Activated CD4-positive, alpha-beta T cell treated with anti-CD3 and anti-CD28 coated beads for 36 hours (primary cell): ENCODE measurements at regions of chr1 and their contacts with region 1.

Region 1: DNA sequence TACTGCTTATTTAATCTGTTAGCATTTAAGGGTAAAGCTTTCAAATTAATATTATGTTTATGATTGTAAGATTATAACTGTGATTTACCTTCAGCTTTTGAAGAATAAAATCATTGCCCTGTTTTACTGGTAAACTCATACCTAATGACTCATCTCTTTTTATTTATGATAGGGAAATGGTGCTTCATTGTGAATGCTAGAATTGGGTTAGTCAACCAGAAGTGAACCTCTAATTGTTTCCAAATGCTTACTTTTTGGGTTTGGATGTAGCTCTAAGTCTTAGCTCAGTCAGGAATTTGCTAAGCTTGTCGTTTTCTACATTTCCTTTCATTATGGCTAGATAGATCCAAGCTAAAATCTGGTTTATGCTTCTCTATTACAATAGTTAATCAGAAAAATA is 59.4 kb downstream of the SLC30A7 start:
- DNase-seq: no peak
- ATAC-seq: peak; percentile 57
- H3K4me3 Mint-ChIP-seq: no peak overlapping the region
- H3K27ac Mint-ChIP-seq: peak overlapping the region; percentile 69
- H3K4me1 Mint-ChIP-seq: peaks cover 59% of the 10 kb centered on the region
- H3K27me3 Mint-ChIP-seq: no peaks in the 10 kb centered on the region

Region 2: DNA sequence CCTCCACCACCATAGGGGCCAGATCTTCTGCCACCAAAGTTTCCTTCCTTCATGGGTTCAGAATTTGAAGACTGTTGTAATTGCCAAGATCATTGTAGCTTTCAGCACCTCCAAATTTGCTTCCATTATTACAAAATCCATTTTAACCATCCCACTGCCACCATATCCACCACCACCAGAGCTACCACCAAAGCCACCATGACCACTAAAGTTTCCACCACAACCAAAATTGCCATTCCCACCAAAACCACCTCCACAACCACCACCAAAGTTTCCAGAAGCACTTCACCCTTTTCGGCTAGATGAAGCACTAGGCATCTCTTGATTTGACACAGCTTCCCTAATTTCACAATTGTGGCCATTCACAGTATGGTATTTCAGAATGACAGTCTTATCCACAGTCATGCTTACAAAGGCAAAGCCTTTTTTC is 14.2 kb before region 1 on chr1:
- CTCF ChIA-PET with region 1: interaction called, 4 read pairs
- POLR2A ChIA-PET with region 1: interaction called, 4 read pairs
- intact Hi-C with region 1: loop called (anchors 1 to 2 kb)
- DNase-seq: peak; percentile 45
- ATAC-seq: peak; percentile 82
- H3K4me3 Mint-ChIP-seq: peak overlapping the region; percentile 67
- H3K27ac Mint-ChIP-seq: peak overlapping the region; percentile 94
- H3K4me1 Mint-ChIP-seq: peaks cover 45% of the 10 kb centered on the region
- H3K27me3 Mint-ChIP-seq: peaks cover 2% of the 10 kb centered on the region